ENCODE measurements at regions of chr5 and their contacts with region 1.

Region 1: GRCh38 chr5:446864-447263 is 3.9 kb downstream of the EXOC3 start:
- DNase-seq: peak; percentile 8
- H3K4me3 ChIP-seq: no peak overlapping the region
- H3K27ac ChIP-seq: no peak overlapping the region
- H3K27me3 ChIP-seq: no peaks in the 10 kb centered on the region
- CTCF ChIP-seq: peak; percentile 68

Region 2: DNA sequence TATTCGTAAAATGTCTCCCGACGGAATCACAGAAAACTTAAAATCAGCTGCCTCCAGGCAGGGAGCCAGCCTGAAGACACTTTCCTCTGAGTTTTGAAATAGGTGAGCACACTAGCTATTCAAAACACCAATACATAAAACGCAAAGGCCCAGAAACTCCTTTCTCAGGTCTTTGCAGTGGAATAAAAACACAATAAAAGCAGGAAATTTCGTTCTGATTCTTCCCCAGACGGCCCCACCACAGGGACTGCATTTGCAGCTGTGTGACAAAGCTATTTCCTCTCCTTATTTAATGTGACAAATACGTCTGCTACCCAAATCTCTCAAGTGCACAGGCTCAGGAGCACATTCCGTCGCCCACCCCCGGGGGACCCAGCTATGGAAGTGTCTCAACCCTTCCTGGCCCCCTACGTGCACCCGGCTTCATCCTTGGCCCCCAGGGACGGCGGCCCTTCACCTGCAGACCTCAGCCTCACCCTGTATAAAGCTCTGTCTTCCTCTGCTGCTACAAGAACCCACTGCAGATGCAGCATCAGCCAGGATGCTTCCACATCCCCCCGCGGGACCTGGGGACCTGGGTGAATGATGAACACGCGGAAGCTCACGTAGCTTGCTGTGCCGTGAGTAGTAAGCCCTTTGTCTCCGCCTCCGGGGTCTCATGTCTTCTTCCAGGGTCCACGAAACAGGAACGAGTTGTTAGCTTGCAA is 100.5 kb before region 1 on chr5:
- CTCF ChIA-PET with region 1: no interaction called
- POLR2A ChIA-PET with region 1: no interaction called
- DNase-seq: no peak
- H3K4me3 ChIP-seq: no peak overlapping the region
- H3K27ac ChIP-seq: no peak overlapping the region
- H3K27me3 ChIP-seq: no peaks in the 10 kb centered on the region
- CTCF ChIP-seq: no peak

Region 3: GRCh38 chr5:374631-375335 is 72.1 kb before region 1 on chr5:
- CTCF ChIA-PET with region 1: no interaction called
- POLR2A ChIA-PET with region 1: no interaction called
- DNase-seq: no peak
- H3K4me3 ChIP-seq: no peak overlapping the region
- H3K27ac ChIP-seq: peak overlapping the region; percentile 61
- H3K27me3 ChIP-seq: no peaks in the 10 kb centered on the region
- CTCF ChIP-seq: no peak

Region 4: GRCh38 chr5:431001-431710 is 15.7 kb before region 1 on chr5:
- CTCF ChIA-PET with region 1: interaction called, 13 read pairs
- POLR2A ChIA-PET with region 1: no interaction called
- DNase-seq: no peak
- H3K4me3 ChIP-seq: no peak overlapping the region
- H3K27ac ChIP-seq: no peak overlapping the region
- H3K27me3 ChIP-seq: no peaks in the 10 kb centered on the region
- CTCF ChIP-seq: peak; percentile 76

Region 5: DNA sequence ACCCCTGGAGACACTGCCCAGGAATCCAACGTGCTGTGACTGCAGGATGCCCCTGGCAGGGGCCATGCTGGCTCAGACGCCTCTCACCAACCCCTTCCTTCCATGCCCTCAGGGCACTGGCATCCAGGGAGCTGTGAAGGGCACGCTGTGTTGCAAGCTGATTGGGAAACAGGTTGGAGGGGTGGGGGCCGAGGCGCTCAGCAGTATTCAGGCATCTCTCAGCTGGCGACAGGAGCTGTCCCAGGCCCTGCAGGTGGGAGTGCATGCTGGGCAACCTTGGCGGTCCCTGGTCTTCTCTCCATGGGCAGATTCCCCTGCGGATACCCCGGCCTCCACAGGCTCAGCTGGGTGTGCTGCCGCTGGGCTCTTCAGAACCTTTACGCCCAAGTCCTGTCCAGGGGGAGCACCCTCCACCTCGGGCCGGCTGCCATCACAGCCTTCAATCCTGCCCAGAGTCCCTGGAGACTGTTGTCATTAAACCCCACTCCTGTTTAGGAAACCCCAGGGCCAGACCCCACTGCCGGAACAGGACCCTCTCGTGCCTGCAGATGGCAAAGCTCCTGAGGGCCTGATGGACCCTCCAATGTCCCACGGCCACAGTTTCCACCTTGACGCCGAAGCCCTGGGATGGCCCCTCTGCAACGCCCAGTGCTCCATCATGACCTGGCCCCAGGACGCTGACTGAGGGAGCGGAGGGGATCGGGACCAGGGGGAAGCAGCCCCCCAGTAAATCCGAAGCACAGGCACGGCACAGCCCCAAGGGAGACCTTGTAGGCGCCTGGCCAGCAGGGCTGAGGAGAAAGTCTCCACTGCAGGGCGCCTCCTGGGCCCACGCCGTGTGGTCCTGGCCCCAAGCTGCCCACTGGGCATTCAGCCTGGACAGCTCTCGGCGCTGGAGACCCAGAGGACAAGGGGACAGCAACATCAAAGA is 237.0 kb after region 1 on chr5:
- CTCF ChIA-PET with region 1: no interaction called
- POLR2A ChIA-PET with region 1: no interaction called
- DNase-seq: no peak
- H3K4me3 ChIP-seq: no peak overlapping the region
- H3K27ac ChIP-seq: no peak overlapping the region
- H3K27me3 ChIP-seq: no peaks in the 10 kb centered on the region
- CTCF ChIP-seq: no peak

Measured in AG04450 (cell line).